SK-N-SH (cell line): ENCODE measurements at regions of chr15 and their contacts with region 1.

Region 1: DNA sequence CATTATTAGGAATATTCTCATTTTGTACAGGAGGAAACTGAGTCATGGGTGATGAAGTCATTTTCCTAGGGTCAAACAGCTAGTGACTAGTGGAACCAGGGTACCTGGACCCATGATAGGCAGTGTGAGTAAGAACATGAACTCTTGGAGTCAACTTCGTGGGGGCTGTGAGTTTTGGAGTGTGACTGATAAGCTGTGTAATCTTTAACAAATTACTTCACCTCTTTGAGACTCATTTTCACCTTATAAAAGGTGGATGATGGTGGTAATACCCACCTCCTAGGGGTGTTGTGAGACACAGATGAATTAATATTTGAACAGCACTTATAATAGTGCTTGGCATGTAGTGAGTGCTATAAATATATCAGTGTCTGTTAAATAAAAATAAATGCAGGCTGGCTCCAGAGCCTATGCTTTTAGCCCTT is 9.1 kb downstream of the SEMA6D start:
- DNase-seq: no peak
- H3K4me3 ChIP-seq: no peak overlapping the region
- H3K27ac ChIP-seq: no peak overlapping the region
- H3K4me1 ChIP-seq: peaks cover 0 to 11% of the 10 kb centered on the region in 2 experiments; a peak in 1 of 4 replicates
- H3K27me3 ChIP-seq: 0 out of 2 replicates have a peak, but pooled peaks cover 5% of the 10 kb centered on the region
- CTCF ChIP-seq: no peak
- EP300 ChIP-seq: no peak
- RAD21 ChIP-seq: no peak

Region 2: DNA sequence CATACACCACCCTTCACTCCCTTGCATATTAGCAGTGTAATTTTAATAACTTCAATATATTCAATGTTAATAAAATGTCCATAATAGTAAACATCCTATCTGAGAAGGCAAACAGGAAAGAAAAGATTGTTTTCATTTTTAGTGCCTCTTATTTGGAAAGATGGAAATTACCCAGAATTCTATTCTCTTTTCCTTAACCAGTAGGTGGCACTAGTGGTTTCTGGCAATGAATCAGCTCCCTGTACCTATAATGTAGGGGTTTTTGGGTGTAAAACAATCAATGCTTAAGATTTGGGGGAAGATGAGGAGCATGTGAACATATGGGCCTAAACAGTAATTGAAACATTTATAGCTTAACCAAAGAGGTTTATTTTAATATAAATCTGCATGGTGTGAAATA is 14.8 kb before region 1 on chr15:
- CTCF ChIA-PET with region 1: interaction called, 17 read pairs
- POLR2A ChIA-PET with region 1: no interaction called
- DNase-seq: peak; percentile 38
- H3K4me3 ChIP-seq: no peak overlapping the region
- H3K27ac ChIP-seq: no peak overlapping the region
- H3K4me1 ChIP-seq: peaks cover 2 to 6% of the 10 kb centered on the region in 2 experiments; a peak in 3 of 4 replicates
- H3K27me3 ChIP-seq: 0 out of 2 replicates have a peak, but pooled peaks cover 21% of the 10 kb centered on the region
- CTCF ChIP-seq: peak; percentile 77
- EP300 ChIP-seq: no peak
- RAD21 ChIP-seq: peak; percentile 65